Posterior cingulate gyrus (tissue), 11 donors: ENCODE measurements at regions of chr15 and their contacts with region 1.

Region 1: GRCh38 chr15:42059661-42060476 is 34.5 kb downstream of the PLA2G4D start:
- DNase-seq: peak in 4 of 10 donors; percentile 48 to 72 (median 52)

Region 2: GRCh38 chr15:41989259-41989933 is 70.5 kb before region 1 on chr15:
- intact Hi-C with region 1: loop called (anchors 2 kb)
- DNase-seq: peak; percentile 77 to 98 (median 90)

Region 3: DNA sequence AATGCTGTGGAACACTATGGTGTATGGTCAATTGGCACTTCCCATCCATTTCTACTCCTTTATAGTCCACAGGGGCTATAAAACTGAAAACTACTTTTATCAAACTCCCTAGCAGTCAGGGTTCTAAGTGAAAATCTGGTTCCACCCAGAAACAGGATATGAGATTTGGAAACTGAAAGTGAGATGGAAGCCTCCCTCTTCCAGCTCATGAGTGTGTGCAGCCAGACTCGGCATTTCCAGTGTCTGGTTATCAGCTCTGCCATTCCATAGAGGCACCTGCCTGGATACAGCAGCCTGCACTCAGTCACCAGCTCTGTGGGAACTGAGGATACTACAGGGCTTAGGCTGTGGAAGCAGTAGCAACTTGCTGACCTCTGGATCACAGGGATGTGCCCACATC is 111.3 kb after region 1 on chr15:
- intact Hi-C with region 1: no loop called
- DNase-seq: no peak